Activated T-helper 2 cell treated with anti-CD3 and anti-CD28 coated beads, Interferon-gamma antibody, Interleukin-2, Interleukin-4, amounts not matched to agents 10 μg/mL and 5 μg/mL and 100 μg/mL, durations not matched to agents 14 hours and 24 hours and 36 hours (primary cell): ENCODE measurements at regions of chr11 and their contacts with region 1.

Region 1: GRCh38 chr11:66069715-66070603 is at the start of gene PACS1:
- DNase-seq: peak; percentile 74
- H3K4me3 Mint-ChIP-seq: peak within 1 kb of the TSS; percentile 84
- H3K27ac Mint-ChIP-seq: peak within 1 kb of the TSS; percentile 91
- H3K4me1 Mint-ChIP-seq: peaks cover 60% of the 10 kb centered on the region
- H3K27me3 Mint-ChIP-seq: no peaks in the 10 kb centered on the region
- total RNA-seq, gene PACS1: 75.6 and 83.7 TPM in 2 replicates

Region 2: DNA sequence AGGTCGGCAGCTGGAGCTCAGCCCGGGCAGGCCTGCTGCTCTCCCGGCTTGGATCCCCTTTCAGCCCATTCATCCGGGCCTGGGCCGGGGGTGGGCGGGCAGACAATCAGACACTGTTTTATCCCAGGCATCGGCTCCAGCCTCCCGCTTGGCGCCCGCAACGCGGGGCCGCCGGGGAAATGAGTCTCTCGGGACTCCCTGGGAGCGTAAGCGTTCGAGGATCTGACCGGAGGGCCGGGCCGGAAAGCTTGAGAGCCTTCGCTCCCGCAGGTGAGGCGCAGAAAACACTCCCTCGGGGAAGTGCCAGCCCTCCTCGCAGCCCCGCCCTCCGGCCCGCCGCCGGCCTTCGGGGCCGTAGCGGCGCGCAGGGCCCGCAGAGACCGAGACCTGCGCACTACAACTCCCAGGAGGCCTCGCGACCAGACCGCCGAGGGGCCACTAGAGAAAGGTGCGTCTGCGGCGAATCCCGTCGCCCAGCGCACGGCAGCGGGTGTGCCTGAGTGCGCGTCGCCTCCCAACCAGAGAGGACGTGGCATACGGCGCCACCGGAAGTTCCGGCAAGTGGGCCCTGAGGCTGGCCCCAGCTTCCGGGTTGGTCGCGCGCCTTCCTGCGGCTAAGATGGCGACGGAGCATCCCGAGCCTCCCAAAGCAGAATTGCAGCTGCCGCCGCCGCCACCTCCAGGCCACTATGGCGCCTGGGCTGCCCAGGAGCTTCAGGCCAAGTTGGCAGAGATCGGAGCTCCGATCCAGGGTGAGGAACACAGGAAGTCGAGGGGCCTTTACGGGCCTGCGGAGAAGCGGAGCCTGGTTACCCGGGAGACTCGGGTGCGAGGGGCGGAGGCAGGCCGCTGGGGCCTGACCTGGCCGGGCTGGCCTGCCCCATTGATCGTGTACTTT is 17.9 kb before region 1 on chr11 and contains the start of gene SF3B2:
- intact Hi-C with region 1: loop called (anchors 1 kb)
- DNase-seq: peak; percentile 97
- H3K4me3 Mint-ChIP-seq: peak within 1 kb of the TSS; percentile 100
- H3K27ac Mint-ChIP-seq: peak within 1 kb of the TSS; percentile 97
- H3K4me1 Mint-ChIP-seq: peaks cover 28% of the 10 kb centered on the region
- H3K27me3 Mint-ChIP-seq: peaks cover 5% of the 10 kb centered on the region
- total RNA-seq, gene SF3B2: 252 and 268 TPM in 2 replicates

Region 3: DNA sequence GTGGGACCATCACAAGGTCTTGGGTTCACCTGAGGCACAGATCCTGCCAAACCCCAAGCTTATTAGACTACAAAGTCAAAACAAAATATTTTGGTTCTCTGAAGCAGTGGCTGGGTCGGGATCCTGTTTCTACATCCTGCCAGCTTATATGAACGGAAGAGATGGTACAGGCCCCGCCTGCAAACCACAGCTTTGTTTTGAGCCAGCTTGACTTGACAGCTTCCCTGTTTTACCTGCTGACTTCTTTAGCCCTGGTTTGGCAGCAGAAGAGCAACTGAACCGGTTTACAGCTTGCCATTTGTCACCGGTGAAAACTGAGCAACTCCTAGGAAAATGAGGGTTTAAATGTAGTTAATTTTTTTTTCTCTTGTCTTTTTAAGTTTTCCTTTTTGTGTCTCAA is 11.5 kb after region 1 on chr11:
- intact Hi-C with region 1: loop called (anchors 1 kb)
- DNase-seq: peak; percentile 67
- H3K4me3 Mint-ChIP-seq: peak overlapping the region; percentile 83
- H3K27ac Mint-ChIP-seq: peak overlapping the region; percentile 97
- H3K4me1 Mint-ChIP-seq: peaks cover 59% of the 10 kb centered on the region
- H3K27me3 Mint-ChIP-seq: no peaks in the 10 kb centered on the region

Region 4: GRCh38 chr11:66106786-66107599 is 37.0 kb after region 1 on chr11:
- intact Hi-C with region 1: loop called (anchors 5 kb)
- DNase-seq: no peak
- H3K4me3 Mint-ChIP-seq: peak overlapping the region; percentile 11
- H3K27ac Mint-ChIP-seq: peak overlapping the region; percentile 76
- H3K4me1 Mint-ChIP-seq: peaks cover 68% of the 10 kb centered on the region
- H3K27me3 Mint-ChIP-seq: no peaks in the 10 kb centered on the region

Region 5: DNA sequence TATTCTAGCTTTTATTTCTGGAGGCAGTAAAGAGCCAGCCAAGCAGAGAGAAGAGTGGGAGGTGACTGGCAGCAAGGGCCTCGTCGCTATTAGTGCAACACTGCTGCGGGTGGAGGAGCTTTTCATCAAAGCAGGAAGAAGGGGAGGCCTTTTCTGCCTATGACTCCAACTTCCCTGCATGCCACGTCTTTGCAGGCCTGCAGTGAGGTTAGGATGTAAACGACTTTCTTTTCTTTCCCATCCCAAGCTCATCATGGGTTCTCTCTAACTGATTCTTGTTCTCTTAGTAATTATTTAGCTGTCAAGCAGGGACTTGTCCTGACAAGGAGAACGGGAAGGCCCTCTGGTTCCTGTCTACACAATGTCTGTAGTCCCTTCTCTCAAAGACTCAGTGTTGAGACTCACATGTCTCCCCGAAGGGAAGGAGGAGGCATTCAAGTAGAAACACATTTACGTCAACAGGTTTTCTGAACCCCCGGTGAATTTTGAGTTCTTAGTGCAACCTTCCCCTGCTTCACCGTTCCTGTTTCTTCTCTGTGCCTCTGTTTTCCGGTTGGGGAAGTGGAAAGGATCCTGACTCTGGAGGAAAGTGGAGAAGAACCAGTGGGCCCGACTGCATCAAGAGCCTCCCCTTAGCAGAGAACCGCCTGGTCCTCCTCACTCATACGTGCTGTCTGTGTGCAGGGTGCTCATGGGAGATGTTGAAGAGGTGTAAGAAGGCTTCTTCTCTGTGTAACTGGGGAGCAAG is 57.0 kb after region 1 on chr11:
- intact Hi-C with region 1: loop called (anchors 1 kb)
- DNase-seq: peak; percentile 48
- H3K4me3 Mint-ChIP-seq: peak overlapping the region; percentile 67
- H3K27ac Mint-ChIP-seq: peak overlapping the region; percentile 95
- H3K4me1 Mint-ChIP-seq: peaks cover 56% of the 10 kb centered on the region
- H3K27me3 Mint-ChIP-seq: no peaks in the 10 kb centered on the region

Region 6: DNA sequence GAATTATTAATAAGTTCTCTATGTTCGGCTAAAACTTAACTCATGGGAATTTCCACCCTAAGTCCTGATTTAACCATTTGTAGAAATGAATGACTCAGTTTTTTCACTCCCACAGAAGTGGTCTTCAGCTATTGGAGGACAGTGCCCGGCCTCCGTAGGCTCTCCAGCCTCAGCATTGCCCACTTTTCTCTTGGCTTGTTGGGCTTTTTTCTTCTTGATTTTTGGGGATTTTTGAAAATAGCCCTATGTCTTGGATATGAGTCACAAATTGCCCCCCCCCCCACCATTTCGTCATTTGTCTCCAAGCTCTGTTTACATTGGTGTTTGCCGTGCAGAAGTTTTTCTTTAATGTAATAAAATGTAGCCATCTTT is 66.8 kb after region 1 on chr11:
- intact Hi-C with region 1: loop called (anchors 1 kb)
- DNase-seq: no peak
- H3K4me3 Mint-ChIP-seq: no peak overlapping the region
- H3K27ac Mint-ChIP-seq: no peak overlapping the region
- H3K4me1 Mint-ChIP-seq: peaks cover 40% of the 10 kb centered on the region
- H3K27me3 Mint-ChIP-seq: no peaks in the 10 kb centered on the region